ENCODE measurements at regions of chr11 and their contacts with region 1.

Region 1: GRCh38 chr11:85694386-85694980 is 8.5 kb upstream of the CCDC89 start:
- DNase-seq: peak in 2 of 4 experiments; percentile 12 to 21
- ATAC-seq: peak; percentile 67
- H3K4me3 ChIP-seq: no peak overlapping the region
- H3K27ac ChIP-seq: no peak overlapping the region
- H3K4me1 ChIP-seq: no peaks in the 10 kb centered on the region
- H3K27me3 ChIP-seq: 0 out of 5 replicates have a peak, but pooled peaks cover 0 to 5% of the 10 kb centered on the region in 2 experiments
- CTCF ChIP-seq: peak in 2 of 3 experiments; percentile 35 to 59; a peak in 2 of 6 replicates
- EP300 ChIP-seq: no peak
- POLR2A ChIP-seq: no peak
- RAD21 ChIP-seq: peak; percentile 55 to 67

Region 2: GRCh38 chr11:85444479-85444878 is 250.0 kb before region 1 on chr11:
- CTCF ChIA-PET with region 1: no interaction called
- POLR2A ChIA-PET with region 1: no interaction called
- in situ Hi-C with region 1: no loop called
- intact Hi-C with region 1: no loop called
- DNase-seq: no peak
- ATAC-seq: no peak
- H3K4me3 ChIP-seq: no peak overlapping the region
- H3K27ac ChIP-seq: no peak overlapping the region
- H3K4me1 ChIP-seq: no peaks in the 10 kb centered on the region
- H3K27me3 ChIP-seq: no peaks in the 10 kb centered on the region
- CTCF ChIP-seq: no peak
- EP300 ChIP-seq: no peak
- POLR2A ChIP-seq: no peak
- RAD21 ChIP-seq: no peak

Region 3: DNA sequence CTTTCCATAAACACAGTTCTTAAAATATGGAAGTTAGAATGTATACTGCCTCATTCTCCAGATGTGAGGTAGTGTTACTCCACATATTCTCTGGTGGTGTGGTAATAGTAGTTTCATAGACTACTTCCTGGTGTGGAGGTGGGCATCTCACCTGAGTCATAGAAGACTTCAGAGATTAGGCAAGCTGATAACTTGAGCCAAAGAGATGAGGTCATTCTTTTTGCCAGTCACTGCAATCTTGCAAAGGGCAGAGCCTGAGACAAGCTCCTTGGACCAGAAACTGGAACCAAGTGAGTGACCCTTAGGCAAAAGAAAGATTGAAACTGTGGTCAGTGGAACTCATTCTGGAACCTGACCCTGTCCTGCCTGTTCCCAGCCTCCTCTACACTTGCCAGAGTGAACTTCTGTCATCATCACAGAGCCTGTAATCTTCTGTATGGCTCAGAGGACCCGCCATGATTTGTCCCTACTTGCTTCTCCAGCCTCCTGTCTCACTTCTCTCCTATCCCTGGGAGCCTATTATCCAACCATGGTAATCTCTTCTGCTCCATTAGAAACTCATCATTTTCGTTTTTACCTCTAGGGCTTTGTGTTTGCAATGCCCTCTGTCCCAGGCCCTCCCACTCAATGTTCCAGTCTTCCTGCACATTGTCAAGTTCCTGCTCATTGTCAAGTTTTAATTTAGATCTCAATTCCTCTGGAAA is 150.1 kb after region 1 on chr11:
- CTCF ChIA-PET with region 1: no interaction called
- POLR2A ChIA-PET with region 1: no interaction called
- in situ Hi-C with region 1: no loop called
- intact Hi-C with region 1: loop called (anchors 5 kb)
- DNase-seq: no peak
- ATAC-seq: no peak; the same call in 2 of the 3 replicates
- H3K4me3 ChIP-seq: no peak overlapping the region
- H3K27ac ChIP-seq: no peak overlapping the region
- H3K4me1 ChIP-seq: no peaks in the 10 kb centered on the region
- H3K27me3 ChIP-seq: no peaks in the 10 kb centered on the region
- CTCF ChIP-seq: no peak
- EP300 ChIP-seq: no peak
- POLR2A ChIP-seq: no peak
- RAD21 ChIP-seq: no peak

Measured in K562 (cell line).